G401 (cell line): ENCODE measurements at regions of chr11 and their contacts with region 1.

Region 1: GRCh38 chr11:29685361-29685760 is 331.5 kb downstream of the KCNA4 start:
- DNase-seq: no peak

Region 2: DNA sequence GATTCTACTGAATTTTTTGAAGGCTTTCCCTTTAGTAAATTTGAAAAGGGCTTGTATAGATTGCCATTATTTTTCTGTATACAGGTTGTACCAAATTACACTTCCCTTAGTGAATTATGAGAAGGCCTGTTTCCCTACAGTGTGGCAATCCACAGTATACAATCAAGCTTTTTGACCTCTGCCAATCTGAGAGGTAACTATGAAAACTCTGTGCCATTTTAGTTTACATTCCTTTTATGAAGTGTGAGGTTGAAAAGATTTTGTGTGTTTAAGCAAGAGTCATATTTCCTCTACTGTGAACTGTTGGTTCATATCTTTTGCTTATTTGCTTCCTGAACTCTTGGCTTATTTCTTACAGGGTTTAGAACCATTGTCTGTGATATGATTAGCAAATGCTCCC is 101.0 kb before region 1 on chr11:
- in situ Hi-C with region 1: no loop called
- DNase-seq: no peak

Region 3: DNA sequence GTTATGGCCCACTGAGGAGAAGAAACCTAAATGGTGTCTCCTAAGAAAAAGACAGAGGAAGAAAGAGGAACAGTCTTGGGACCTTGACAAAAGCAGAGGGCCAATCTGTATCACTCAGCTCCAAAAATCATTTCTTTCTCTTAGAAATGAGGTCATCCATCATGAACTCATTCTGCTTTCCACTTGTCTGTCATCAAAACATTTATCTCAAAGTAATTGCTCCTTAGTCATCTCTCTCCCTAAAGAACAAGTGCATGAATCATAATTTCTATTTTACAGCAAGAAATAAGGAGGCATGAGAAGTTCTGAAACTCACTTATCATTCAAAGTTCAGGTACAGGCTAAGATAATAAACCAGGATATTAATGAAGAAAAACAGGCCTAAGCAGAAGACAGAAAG is 44.2 kb before region 1 on chr11:
- in situ Hi-C with region 1: no loop called
- DNase-seq: no peak

Region 4: DNA sequence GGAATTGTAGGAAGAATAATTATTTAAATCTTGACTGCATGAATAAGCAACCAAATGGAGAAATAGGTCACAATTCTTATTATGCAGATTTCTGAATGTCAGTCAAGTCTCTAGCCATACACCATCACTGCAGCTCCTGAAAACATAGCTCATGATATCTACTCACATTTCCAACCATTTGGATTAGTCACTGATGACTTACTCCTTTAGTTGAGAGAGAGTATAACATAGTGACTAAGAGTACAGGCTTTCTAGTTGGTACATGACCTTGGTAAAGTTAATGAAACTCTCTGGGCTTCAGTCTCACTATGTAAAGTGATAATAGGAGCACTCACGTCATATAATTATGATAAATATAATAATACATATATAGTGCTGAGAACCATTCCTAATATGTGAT is 66.3 kb after region 1 on chr11:
- in situ Hi-C with region 1: loop called (anchors 10 kb)
- DNase-seq: no peak

Region 5: DNA sequence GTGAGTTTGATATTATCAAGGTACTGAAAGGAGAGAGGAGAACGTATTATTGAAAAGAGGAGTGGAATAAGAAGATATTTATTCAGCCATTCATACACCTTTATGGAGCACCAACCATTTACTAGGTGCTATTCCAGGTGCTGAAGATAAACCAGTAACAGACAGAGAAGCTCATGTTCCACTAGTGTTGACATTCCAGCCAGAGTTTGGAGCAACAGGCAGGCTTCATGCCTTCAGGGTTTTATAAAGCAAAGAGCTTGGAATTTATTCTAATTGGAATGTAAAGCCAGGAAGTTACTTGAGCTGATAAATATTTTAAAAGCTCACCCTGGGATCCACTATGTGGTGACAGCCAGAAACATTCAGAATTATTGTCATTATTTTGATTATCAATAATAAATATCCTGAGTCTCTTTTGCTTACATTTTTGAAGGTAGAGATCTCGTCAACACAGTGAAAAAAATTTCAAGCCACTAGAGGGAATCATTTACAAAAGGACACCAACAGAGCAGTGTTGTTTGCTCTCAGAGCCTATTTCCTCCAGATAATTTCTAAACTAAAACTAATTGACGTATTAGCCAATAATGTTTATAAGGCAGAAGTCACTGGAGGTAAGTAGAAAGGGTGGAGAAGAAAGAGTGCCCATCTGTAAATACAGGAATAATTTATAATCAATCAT is 159.5 kb after region 1 on chr11:
- in situ Hi-C with region 1: no loop called
- DNase-seq: no peak